Left ventricle myocardium inferior (tissue), 1 donor: ENCODE measurements at regions of chr16 and their contacts with region 1.

Region 1: GRCh38 chr16:10509534-10510025 is 70.8 kb downstream of the EMP2 start:
- DNase-seq: no peak
- H3K4me3 ChIP-seq: no peak overlapping the region
- H3K27ac ChIP-seq: no peak overlapping the region
- H3K4me1 ChIP-seq: peaks cover 11% of the 10 kb centered on the region
- H3K27me3 ChIP-seq: no peaks in the 10 kb centered on the region
- CTCF ChIP-seq: peak; percentile 87

Region 2: GRCh38 chr16:10256784-10257641 is 252.6 kb before region 1 on chr16:
- intact Hi-C with region 1: loop called (anchors 5 kb)
- DNase-seq: no peak
- H3K4me3 ChIP-seq: no peak overlapping the region
- H3K27ac ChIP-seq: no peak overlapping the region
- H3K4me1 ChIP-seq: peaks cover 6% of the 10 kb centered on the region
- H3K27me3 ChIP-seq: peaks cover 22% of the 10 kb centered on the region
- CTCF ChIP-seq: peak; percentile 72

Region 3: GRCh38 chr16:10314811-10315210 is 194.8 kb before region 1 on chr16:
- intact Hi-C with region 1: loop called (anchors 5 kb)
- DNase-seq: no peak
- H3K4me3 ChIP-seq: no peak overlapping the region
- H3K27ac ChIP-seq: no peak overlapping the region
- H3K4me1 ChIP-seq: no peaks in the 10 kb centered on the region
- H3K27me3 ChIP-seq: no peaks in the 10 kb centered on the region
- CTCF ChIP-seq: peak; percentile 44

Region 4: GRCh38 chr16:10558746-10559641 is 49.4 kb after region 1 on chr16:
- intact Hi-C with region 1: no loop called
- DNase-seq: peak; percentile 77
- H3K4me3 ChIP-seq: peak overlapping the region; percentile 49
- H3K27ac ChIP-seq: peak overlapping the region; percentile 97
- H3K4me1 ChIP-seq: peaks cover 100% of the 10 kb centered on the region
- H3K27me3 ChIP-seq: no peaks in the 10 kb centered on the region
- CTCF ChIP-seq: no peak

Region 5: DNA sequence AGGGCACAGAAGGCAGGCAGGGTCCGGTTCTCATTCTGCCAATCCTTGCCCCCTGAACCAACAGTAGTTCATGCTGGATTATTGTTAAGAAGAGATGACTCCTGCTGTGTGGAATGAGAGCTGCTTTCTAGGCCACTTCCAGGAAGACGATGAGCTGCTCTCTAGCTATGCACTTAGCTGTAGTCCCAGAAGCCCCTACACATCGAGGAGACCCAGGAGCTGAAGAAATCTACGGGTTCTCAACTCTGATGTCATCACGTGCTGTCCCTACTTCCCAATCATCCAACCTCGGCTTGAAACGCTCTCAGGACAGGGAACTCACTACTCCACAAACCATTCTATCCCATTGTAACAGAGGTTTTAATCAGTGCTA is 99.8 kb after region 1 on chr16:
- intact Hi-C with region 1: no loop called
- DNase-seq: no peak
- H3K4me3 ChIP-seq: no peak overlapping the region
- H3K27ac ChIP-seq: peak overlapping the region; percentile 71
- H3K4me1 ChIP-seq: peaks cover 30% of the 10 kb centered on the region
- H3K27me3 ChIP-seq: no peaks in the 10 kb centered on the region
- CTCF ChIP-seq: no peak

Region 6: DNA sequence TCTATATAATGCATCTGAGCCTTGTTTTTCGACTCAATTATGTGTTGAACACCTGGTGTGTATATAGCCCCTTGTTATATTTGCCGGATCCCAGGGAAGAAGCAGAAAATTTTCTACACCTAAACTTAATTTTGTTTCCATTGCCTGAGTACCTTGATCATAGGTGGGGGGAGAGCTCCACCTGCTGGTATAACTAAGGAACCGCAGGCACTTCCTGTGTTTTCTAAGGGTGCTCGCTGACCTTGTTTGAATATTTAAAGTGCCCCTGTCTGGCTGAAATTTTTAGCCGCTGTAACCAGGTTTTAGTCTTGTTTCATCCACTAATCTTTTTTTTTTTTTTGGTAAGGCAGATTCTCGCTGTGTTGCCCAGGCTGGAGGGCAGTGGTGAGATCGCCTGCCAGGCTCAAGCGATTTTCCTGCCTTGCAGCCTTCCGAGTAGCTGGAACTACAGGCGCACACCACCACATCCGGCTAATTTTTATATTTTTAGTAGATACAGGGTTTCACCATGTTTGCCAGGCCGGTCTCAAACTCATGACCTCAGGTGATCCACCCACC is 227.6 kb after region 1 on chr16:
- intact Hi-C with region 1: loop called (anchors 5 kb)
- DNase-seq: no peak
- H3K4me3 ChIP-seq: peak overlapping the region; percentile 40
- H3K27ac ChIP-seq: peak overlapping the region; percentile 87
- H3K4me1 ChIP-seq: peaks cover 24% of the 10 kb centered on the region
- H3K27me3 ChIP-seq: no peaks in the 10 kb centered on the region
- CTCF ChIP-seq: peak; percentile 93